ENCODE measurements at regions of chr1 and their contacts with region 1.

Region 1: DNA sequence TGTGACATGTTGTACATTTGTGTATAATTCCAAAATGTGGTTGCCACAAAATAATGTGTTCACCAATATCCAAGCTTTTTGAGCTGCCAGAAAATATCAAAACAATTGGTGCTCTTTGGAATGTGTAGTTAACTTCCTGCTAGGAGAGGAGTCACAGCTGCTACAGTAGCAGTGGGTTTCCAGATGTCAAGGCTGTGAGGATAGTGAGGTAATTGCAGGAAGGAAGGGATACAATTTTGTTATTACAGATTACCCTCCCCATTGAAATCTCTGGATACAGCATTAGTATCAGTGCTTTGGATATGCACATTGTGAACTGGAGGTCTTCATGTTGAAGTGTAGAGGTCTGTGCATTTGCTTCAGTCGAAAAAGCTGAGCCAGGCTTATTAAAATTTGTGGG is 253.2 kb downstream of the PTPRC start:
- DNase-seq: peak; percentile 19
- ATAC-seq: peak; percentile 55
- H3K4me3 ChIP-seq: no peak overlapping the region
- H3K27ac ChIP-seq: no peak overlapping the region
- H3K4me1 ChIP-seq: peaks cover 15% of the 10 kb centered on the region
- H3K27me3 ChIP-seq: no peaks in the 10 kb centered on the region
- CTCF ChIP-seq: no peak

Region 2: DNA sequence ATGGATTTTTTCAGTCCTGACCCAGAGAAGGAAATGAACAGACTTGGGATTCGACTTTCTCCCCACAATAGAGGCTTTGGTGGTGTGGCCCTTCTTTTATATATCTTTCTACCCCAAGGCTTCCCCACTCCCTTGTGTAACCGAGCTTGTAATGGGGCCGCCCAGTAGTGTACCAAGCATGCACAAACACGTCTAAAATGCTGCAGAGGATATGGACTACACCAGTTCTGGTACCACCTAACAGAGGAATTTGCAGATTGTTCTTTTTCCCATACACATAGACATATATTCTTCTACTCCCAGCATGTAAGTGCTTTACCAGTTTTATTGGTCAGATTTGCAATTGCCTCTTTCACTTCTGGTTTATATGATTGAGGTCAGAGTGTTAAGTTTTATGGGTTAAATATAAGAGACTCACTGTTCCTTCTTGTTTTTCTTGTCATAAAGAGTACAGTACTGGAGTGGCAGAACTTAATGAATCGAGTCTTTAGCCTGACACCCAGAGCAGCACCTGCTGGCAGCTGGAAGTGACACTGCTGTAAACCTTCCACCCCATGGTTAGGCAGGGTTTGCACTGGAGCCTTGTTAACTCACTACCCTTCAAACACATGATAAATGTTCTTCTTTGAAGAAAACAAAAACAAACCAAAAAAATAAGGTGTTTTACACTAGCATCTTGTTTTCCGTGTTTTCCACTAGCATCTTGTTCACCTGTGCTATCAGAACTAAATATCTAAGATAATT is 54.6 kb before region 1 on chr1:
- CTCF ChIA-PET with region 1: no interaction called
- POLR2A ChIA-PET with region 1: no interaction called
- intact Hi-C with region 1: loop called (anchors 2 kb)
- DNase-seq: peak; percentile 18
- ATAC-seq: peak; percentile 87
- H3K4me3 ChIP-seq: no peak overlapping the region
- H3K27ac ChIP-seq: peak overlapping the region; percentile 55
- H3K4me1 ChIP-seq: peaks cover 18% of the 10 kb centered on the region
- H3K27me3 ChIP-seq: no peaks in the 10 kb centered on the region
- CTCF ChIP-seq: no peak

Region 3: DNA sequence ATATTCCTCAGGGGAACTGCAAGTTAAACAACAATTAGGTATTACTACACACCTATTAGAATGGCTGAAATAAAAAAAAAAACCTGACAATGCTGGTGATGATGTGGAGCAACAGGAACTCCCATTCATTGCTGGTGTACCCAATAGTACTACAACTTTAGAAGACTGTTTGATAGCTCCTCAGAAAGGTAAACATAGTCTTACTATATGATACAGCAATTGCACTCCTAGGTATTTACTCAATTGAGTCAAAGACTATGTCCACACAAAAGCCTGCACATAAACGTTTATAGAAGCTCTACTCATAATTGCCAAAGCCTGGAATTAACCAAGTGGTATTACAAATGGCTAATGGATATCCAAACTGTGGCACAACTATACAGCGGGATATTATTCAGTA is 610.8 kb after region 1 on chr1:
- CTCF ChIA-PET with region 1: no interaction called
- POLR2A ChIA-PET with region 1: no interaction called
- intact Hi-C with region 1: no loop called
- DNase-seq: peak; percentile 32
- ATAC-seq: peak; percentile 71
- H3K4me3 ChIP-seq: no peak overlapping the region
- H3K27ac ChIP-seq: no peak overlapping the region
- H3K4me1 ChIP-seq: no peaks in the 10 kb centered on the region
- H3K27me3 ChIP-seq: no peaks in the 10 kb centered on the region
- CTCF ChIP-seq: no peak

Measured in PC-3 (cell line).